ENCODE measurements at regions of chr11 and their contacts with region 1.

Region 1: GRCh38 chr11:2420502-2421225 is 20.1 kb downstream of the TSSC4 start:
- DNase-seq: peak; percentile 92

Region 2: DNA sequence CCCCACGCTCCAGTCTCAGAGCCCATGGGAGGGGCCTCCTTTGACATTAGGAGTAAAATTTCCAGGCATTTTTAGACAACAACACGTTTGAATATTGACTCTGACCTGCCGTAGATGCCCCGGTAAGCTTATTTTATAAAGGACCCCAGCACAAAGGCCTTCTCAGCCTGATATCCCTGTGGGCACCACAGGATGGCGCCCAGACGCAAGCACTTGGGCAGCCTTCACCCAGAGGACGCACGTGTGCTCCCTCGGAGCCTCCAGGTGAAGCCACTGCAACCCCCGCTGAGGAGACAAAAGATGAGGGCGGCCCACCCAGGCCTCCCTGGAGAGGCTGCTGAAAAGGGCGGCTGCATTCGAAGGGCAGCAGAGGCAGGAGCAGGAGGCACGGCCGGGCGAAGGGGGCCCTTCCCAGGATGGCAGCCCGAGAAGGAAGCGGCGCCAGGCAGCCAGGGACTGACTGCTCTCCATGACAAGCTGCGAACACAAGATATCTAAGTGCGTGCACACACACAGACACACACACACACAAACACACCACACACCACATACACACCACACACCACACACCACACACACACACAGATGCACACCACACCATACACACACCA is 233.9 kb before region 1 on chr11:
- CTCF ChIA-PET with region 1: interaction called, 16 read pairs
- POLR2A ChIA-PET with region 1: no interaction called
- DNase-seq: peak; percentile 59

Region 3: DNA sequence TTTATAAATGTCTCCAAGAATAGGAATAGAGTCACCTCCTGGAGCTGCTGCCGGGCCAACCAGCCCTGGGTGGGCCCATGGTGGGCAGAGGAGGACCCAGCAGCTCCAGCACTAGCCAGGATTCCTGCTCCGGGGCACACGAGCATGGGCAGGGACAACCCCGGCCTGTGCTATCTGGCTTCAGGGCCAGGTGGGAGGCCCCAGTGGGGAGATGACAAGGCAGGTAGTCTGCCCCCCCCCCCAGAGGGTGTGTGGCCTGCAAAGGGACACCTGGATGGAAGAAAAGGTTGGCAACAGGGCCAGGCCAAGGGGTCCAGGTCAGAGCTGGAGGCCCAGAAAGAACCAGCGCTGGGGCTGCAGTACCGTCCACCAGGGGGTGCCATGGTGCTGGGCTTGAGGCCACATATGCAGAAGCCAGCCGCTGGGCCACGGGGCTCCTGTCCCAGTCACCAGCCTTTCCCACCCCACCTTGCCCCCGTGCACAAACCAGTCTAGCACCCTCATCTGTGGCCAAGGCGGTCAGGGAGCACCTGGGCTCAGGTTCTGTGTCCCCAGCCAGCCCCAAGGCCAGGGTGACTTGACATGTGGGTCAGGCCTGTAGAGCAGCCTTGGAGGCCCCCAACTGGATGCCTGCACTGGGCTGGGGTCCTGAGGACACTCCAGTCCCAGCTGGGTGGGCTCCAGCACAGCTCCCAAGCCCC is 115.4 kb before region 1 on chr11:
- CTCF ChIA-PET with region 1: interaction called, 87 read pairs
- POLR2A ChIA-PET with region 1: interaction called, 28 read pairs
- DNase-seq: peak; percentile 81

Region 4: GRCh38 chr11:2400069-2400760 is 20.4 kb before region 1 on chr11 and contains the start of gene TSSC4:
- CTCF ChIA-PET with region 1: interaction called, 27 read pairs
- POLR2A ChIA-PET with region 1: interaction called, 30 read pairs
- DNase-seq: peak; percentile 97

Region 5: DNA sequence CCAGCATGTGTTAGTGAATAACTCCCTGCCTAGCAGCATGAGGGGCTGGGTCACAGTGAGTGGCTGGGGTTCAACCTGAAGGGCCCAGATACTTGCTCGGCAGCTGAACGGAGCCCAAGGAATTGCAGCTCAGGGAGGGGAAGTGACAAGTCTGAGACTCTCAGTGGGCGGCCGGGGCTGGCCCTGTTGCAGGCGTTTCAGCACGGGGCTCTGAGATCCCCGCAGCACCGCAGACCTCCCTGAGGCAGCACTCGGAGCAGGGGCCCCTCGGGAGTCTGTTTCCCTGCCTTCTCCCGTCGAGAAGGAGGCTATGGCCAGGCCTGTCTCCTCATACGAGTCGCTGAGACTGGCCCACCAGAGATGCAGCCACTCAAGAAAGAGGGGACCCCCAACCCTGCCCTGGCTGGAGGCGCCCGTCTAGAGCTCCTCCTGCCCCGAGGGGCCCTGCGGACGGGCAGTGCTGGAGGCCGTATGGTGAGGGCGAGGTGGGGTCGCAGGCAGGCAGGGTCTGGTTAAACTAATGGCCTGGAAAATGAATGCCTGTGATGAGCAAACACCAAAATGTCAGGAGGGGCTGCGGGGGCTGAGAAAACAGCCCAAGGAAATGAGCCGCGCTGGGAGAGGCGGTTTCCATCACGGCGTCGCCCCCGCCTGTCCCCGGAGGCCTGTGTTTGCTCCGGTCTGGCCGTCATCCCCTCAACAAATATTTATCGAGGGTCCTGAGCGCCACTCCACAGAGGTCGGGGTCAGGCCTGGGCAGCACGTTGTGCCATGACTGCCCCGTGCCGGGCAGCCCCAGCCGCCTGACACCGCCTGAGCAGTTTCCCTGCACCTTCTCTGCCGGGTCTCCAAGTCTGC is 10.8 kb before region 1 on chr11:
- CTCF ChIA-PET with region 1: interaction called, 29 read pairs
- POLR2A ChIA-PET with region 1: interaction called, 18 read pairs
- DNase-seq: no peak

Region 6: DNA sequence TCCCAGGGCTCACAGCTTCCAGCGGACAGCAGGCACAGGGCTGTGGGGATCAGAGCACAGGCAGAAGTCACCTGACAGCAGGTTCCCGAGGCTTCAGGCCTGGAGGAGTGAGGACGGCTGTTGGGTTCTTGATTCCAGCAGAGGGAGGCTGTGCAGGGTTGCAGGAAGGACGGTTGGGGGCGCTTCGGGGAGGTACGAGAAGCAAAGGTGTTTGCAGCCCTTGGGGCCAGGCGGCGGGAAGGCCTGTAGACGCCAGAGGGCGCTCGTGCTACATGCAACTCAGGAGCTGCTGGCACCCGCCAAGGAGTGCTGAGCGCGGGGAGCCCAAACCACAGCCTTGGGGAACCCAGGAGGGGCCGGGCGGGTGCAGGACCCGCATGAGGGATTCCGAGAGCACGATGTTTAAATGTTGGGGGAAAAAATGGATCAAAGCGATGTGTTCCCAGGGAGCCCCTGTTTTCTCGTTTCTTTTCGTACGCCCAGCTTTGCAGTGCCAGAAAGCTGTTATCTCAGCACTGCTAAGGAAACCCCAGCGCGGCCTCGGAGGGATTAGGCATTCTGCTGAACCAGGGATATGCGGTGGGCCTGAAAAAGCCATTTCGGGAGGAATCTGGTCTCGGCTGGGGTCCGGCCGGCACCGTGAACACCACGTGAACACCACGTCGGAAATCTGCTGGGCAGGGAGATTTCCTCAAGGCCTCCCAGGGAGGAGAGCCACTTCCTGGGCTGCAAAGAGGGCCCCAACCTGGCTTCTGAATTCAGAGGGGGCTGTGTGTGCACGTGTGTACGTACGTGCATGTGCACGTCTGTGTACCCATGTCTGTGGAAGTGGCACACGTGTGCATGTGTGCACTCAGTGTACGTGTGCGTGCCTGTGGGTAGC is 112.3 kb after region 1 on chr11:
- CTCF ChIA-PET with region 1: interaction called, 29 read pairs
- POLR2A ChIA-PET with region 1: no interaction called
- DNase-seq: peak; percentile 85

Measured in HEK293T (cell line).